ENCODE measurements at regions of chr17 and their contacts with region 1.

Region 1: GRCh38 chr17:64117981-64118979 is 11.7 kb downstream of the ERN1 start:
- DNase-seq: no peak
- ATAC-seq: no peak
- H3K4me3 ChIP-seq: no peak overlapping the region
- H3K27ac ChIP-seq: no peak overlapping the region
- H3K4me1 ChIP-seq: peaks cover 30% of the 10 kb centered on the region
- H3K27me3 ChIP-seq: no peaks in the 10 kb centered on the region
- CTCF ChIP-seq: no peak
- EP300 ChIP-seq: no peak
- POLR2A ChIP-seq: no peak
- RAD21 ChIP-seq: no peak

Region 2: GRCh38 chr17:64063766-64064224 is 54.5 kb before region 1 on chr17:
- CTCF ChIA-PET with region 1: interaction called, 7 read pairs
- POLR2A ChIA-PET with region 1: interaction called, 4 read pairs
- RAD21 ChIA-PET with region 1: interaction called, 17 read pairs
- SMC1A ChIA-PET with region 1: interaction called, 15 read pairs
- in situ Hi-C with region 1: no loop called
- intact Hi-C with region 1: no loop called
- DNase-seq: no peak
- ATAC-seq: peak; percentile 51
- H3K4me3 ChIP-seq: no peak overlapping the region
- H3K27ac ChIP-seq: peak overlapping the region; percentile 54; the same call in 1 of the 2 replicates
- H3K4me1 ChIP-seq: peaks cover 37% of the 10 kb centered on the region
- H3K27me3 ChIP-seq: no peaks in the 10 kb centered on the region
- CTCF ChIP-seq: peak; percentile 40 to 49 (median 45)
- EP300 ChIP-seq: no peak
- POLR2A ChIP-seq: no peak
- RAD21 ChIP-seq: peak; percentile 63

Region 3: DNA sequence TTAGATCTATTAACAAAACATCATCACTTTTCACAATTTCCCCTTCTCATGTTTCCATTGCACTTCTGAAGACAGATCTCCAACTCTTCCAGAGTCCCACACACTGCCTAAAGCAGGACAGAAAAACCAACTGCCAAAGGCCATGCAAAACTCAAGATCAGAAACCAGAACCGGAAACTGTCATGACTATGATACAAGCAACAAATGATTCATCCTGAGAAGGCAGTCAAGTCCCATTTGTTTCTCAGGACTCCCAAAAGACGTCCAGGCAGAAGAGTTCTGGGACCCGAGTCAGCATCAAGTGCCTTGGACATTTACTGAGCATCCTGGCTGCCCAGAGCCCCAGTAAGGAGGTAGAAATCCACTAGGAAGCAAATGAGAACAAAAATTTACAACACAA is 27.2 kb before region 1 on chr17:
- CTCF ChIA-PET with region 1: interaction called, 4 read pairs
- POLR2A ChIA-PET with region 1: interaction called, 3 read pairs
- RAD21 ChIA-PET with region 1: no interaction called
- SMC1A ChIA-PET with region 1: interaction called, 10 read pairs
- in situ Hi-C with region 1: no loop called
- intact Hi-C with region 1: no loop called
- DNase-seq: peak; percentile 57
- ATAC-seq: peak; percentile 90
- H3K4me3 ChIP-seq: peak overlapping the region; percentile 9; the same call in 1 of the 2 replicates
- H3K27ac ChIP-seq: peak overlapping the region; percentile 54
- H3K4me1 ChIP-seq: peaks cover 42% of the 10 kb centered on the region
- H3K27me3 ChIP-seq: no peaks in the 10 kb centered on the region
- CTCF ChIP-seq: no peak
- EP300 ChIP-seq: no peak
- POLR2A ChIP-seq: 0 out of 2 replicates have a peak, but pooled peaks have one; percentile 11
- RAD21 ChIP-seq: no peak

Region 4: DNA sequence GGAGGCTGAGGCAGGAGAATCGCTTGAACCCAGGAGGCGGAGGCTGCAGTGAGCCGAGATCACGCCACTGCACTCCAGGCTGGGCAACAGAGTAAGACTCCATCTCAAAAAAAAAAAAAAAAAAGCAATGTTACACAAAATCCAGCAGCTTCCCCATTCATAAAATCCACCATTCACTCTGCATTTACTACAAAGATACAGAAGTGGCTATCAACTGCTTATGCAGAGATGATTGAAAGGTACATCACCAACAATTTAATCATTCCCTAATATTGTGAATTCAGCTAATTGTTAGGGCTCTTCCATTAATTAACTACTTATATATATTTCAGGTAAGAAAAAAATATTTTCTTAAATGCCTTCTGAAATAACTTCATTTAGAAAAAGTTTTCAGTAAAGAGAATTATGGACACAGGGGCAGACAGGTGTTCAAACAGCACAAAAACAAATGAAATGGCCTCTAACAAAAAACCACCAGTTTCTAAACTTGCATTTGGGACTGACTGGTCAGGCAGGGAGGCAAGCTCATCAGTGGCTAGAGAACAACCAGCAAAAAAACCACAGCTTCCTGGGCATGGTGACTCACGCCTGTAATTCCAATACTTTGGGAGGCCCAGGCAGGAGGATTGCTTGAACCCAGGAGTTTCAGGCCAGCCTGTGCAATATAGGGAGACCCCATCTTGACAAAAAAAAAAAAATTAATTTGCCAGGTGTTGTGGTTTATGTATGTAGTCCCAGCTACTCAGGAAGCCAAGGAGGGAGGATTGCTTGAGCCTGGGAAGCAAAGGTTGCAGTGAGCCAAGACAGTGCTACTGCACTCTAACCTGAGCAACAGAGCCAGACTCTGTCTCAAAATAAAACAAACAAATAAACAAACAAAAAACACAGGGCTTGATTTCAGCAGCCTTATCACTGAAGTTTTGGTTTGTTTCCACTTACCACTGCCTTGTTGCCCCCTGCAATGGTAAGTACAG is 14.6 kb before region 1 on chr17:
- CTCF ChIA-PET with region 1: interaction called, 9 read pairs
- POLR2A ChIA-PET with region 1: interaction called, 12 read pairs
- RAD21 ChIA-PET with region 1: interaction called, 10 read pairs
- SMC1A ChIA-PET with region 1: interaction called, 19 read pairs
- in situ Hi-C with region 1: no loop called
- intact Hi-C with region 1: no loop called
- DNase-seq: peak; percentile 55
- ATAC-seq: peak; percentile 65
- H3K4me3 ChIP-seq: no peak overlapping the region
- H3K27ac ChIP-seq: peak overlapping the region; percentile 57
- H3K4me1 ChIP-seq: peaks cover 39% of the 10 kb centered on the region
- H3K27me3 ChIP-seq: no peaks in the 10 kb centered on the region
- CTCF ChIP-seq: no peak
- EP300 ChIP-seq: no peak
- POLR2A ChIP-seq: no peak
- RAD21 ChIP-seq: no peak

Region 5: GRCh38 chr17:64158831-64159590 is 40.7 kb after region 1 on chr17:
- CTCF ChIA-PET with region 1: no interaction called
- POLR2A ChIA-PET with region 1: no interaction called
- RAD21 ChIA-PET with region 1: no interaction called
- SMC1A ChIA-PET with region 1: no interaction called
- in situ Hi-C with region 1: no loop called
- intact Hi-C with region 1: no loop called
- DNase-seq: no peak
- ATAC-seq: no peak
- H3K4me3 ChIP-seq: no peak overlapping the region
- H3K27ac ChIP-seq: no peak overlapping the region
- H3K4me1 ChIP-seq: no peaks in the 10 kb centered on the region
- H3K27me3 ChIP-seq: no peaks in the 10 kb centered on the region
- CTCF ChIP-seq: no peak
- EP300 ChIP-seq: no peak
- POLR2A ChIP-seq: no peak
- RAD21 ChIP-seq: no peak

Region 6: DNA sequence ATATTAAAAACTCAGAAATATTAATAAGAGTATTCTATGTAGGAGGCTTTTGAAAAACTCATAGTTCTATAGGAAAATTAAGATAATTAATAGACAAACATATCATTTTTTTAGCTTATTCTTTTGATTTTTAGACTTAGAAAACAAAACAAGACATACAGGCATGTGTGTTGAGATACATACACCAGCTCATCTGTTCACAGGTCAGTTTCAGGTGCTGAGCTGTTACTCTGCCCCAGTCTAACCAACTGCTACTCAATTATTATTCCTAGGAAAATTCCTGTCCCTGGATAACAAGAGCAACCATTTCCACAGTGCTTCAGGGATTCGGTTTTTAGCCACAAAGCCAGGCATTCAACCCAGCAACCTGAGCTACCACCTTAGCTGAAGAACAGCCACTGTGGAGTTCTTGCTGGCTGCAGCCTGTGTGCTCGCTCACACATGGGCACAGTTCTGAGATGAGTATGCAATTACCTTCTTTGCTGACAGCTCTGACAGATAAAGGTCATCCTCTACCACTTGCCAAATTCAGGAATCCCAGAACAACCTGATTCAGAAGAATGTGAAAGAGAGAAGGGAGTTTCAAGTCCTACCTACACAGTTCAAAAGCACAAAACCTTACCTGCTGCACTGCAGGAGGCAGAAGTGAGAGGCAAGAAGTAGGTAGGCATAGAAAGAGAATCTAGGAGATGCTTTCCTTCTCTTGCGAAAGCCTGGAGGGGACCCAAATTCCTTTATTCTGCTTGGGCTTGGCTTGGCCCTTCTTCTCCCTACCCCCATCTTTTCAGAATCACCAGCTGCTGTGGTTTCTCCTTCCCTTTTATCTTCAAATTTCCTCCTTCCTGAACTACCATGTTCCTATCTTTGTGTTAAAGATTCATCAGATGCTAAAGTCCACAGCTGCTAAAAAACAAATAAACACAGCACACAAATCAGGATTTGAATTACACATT is 82.1 kb after region 1 on chr17:
- CTCF ChIA-PET with region 1: no interaction called
- POLR2A ChIA-PET with region 1: no interaction called
- RAD21 ChIA-PET with region 1: no interaction called
- SMC1A ChIA-PET with region 1: no interaction called
- in situ Hi-C with region 1: no loop called
- intact Hi-C with region 1: no loop called
- DNase-seq: peak; percentile 19
- ATAC-seq: peak; percentile 87
- H3K4me3 ChIP-seq: no peak overlapping the region
- H3K27ac ChIP-seq: no peak overlapping the region
- H3K4me1 ChIP-seq: peaks cover 8% of the 10 kb centered on the region
- H3K27me3 ChIP-seq: no peaks in the 10 kb centered on the region
- CTCF ChIP-seq: no peak
- EP300 ChIP-seq: no peak
- POLR2A ChIP-seq: no peak
- RAD21 ChIP-seq: no peak

Measured in GM12878 (cell line).